ENCODE measurements at regions of chr5 and their contacts with region 1.

Region 1: GRCh38 chr5:136686192-136686872 is 321.0 kb upstream of the TRPC7 start:
- DNase-seq: peak in 1 of 9 experiments; percentile 15
- ATAC-seq: no peak
- H3K4me3 ChIP-seq: no peak overlapping the region
- H3K4me3 Mint-ChIP-seq: no peak overlapping the region
- H3K27ac ChIP-seq: no peak overlapping the region
- H3K27ac Mint-ChIP-seq: no peak overlapping the region
- H3K4me1 ChIP-seq: no peaks in the 10 kb centered on the region
- H3K4me1 Mint-ChIP-seq: no peaks in the 10 kb centered on the region
- H3K27me3 ChIP-seq: no peaks in the 10 kb centered on the region
- H3K27me3 Mint-ChIP-seq: no peaks in the 10 kb centered on the region
- CTCF ChIP-seq: no peak

Region 2: DNA sequence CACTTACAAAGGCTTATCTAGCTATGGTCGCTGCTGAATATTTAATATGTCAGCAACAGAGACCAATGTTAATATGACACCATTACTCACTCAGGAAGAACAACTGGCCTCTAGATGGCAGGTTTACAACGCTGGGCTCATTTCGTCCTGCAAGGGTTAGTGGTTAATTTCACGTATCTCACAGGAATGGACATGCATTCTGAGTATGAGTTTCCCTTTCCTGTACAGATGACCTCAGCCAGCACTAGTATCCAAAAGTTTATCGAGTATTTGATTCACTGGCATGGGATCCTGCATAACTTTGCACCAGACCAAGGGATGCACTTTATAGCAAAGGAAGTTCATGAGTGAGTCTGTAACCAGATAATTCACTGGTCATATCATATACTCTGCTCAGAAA is 312.3 kb before region 1 on chr5:
- CTCF ChIA-PET with region 1: interaction called, 3 read pairs
- POLR2A ChIA-PET with region 1: no interaction called
- intact Hi-C with region 1: loop called (anchors 5 to 10 kb)
- DNase-seq: peak in 2 of 9 experiments; percentile 4 to 15
- ATAC-seq: no peak
- H3K4me3 ChIP-seq: no peak overlapping the region
- H3K4me3 Mint-ChIP-seq: no peak overlapping the region
- H3K27ac ChIP-seq: no peak overlapping the region
- H3K27ac Mint-ChIP-seq: no peak overlapping the region
- H3K4me1 ChIP-seq: no peaks in the 10 kb centered on the region
- H3K4me1 Mint-ChIP-seq: no peaks in the 10 kb centered on the region
- H3K27me3 ChIP-seq: no peaks in the 10 kb centered on the region
- H3K27me3 Mint-ChIP-seq: peaks cover 2% of the 10 kb centered on the region
- CTCF ChIP-seq: no peak

Region 3: GRCh38 chr5:136703706-136704105 is 17.4 kb after region 1 on chr5:
- CTCF ChIA-PET with region 1: no interaction called
- POLR2A ChIA-PET with region 1: no interaction called
- intact Hi-C with region 1: no loop called
- DNase-seq: no peak
- ATAC-seq: no peak
- H3K4me3 ChIP-seq: no peak overlapping the region
- H3K4me3 Mint-ChIP-seq: no peak overlapping the region
- H3K27ac ChIP-seq: no peak overlapping the region
- H3K27ac Mint-ChIP-seq: no peak overlapping the region
- H3K4me1 ChIP-seq: no peaks in the 10 kb centered on the region
- H3K4me1 Mint-ChIP-seq: no peaks in the 10 kb centered on the region
- H3K27me3 ChIP-seq: no peaks in the 10 kb centered on the region
- H3K27me3 Mint-ChIP-seq: peaks cover 2% of the 10 kb centered on the region
- CTCF ChIP-seq: no peak